Ascending aorta (tissue), 2 donors: ENCODE measurements at regions of chr19 and their contacts with region 1.

Region 1: DNA sequence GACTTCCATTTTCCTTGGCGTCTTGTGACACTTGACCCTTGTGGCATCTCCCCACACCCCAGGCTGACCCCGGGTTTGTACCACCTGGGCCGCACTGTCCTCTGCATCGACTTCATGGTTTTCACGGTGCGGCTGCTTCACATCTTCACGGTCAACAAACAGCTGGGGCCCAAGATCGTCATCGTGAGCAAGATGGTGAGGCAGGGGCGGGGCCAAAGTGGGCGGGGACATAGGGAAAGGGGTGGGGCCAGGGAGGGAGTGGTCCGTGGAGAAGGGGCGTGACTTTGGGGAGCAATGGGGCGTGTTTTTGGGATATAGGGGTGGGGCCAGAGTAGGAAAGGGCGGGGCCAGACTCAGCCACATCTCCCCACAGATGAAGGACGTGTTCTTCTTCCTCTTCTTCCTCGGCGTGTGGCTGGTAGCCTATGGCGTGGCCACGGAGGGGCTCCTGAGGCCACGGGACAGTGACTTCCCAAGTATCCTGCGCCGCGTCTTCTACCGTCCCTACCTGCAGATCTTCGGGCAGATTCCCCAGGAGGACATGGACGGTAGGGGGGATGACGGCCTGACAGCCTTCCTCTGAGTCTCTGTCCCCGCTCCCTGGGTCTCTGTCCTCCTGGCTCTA is 42.8 kb downstream of the TRPM4 start:
- DNase-seq: no peak
- H3K4me3 ChIP-seq: no peak overlapping the region
- H3K27ac ChIP-seq: no peak overlapping the region
- H3K4me1 ChIP-seq: no peaks in the 10 kb centered on the region
- H3K27me3 ChIP-seq: no peaks in the 10 kb centered on the region
- CTCF ChIP-seq: no peak

Region 2: GRCh38 chr19:49097455-49098288 is 102.7 kb before region 1 on chr19:
- intact Hi-C with region 1: loop called (anchors 2 kb)
- DNase-seq: peak in 1 of 2 donors; percentile 80
- H3K4me3 ChIP-seq: no peak overlapping the region
- H3K27ac ChIP-seq: no peak overlapping the region
- H3K4me1 ChIP-seq: no peaks in the 10 kb centered on the region
- H3K27me3 ChIP-seq: no peaks in the 10 kb centered on the region
- CTCF ChIP-seq: peak; percentile 95 to 99 (median 98)